ENCODE measurements at regions of chr1 and their contacts with region 1.

Region 1: DNA sequence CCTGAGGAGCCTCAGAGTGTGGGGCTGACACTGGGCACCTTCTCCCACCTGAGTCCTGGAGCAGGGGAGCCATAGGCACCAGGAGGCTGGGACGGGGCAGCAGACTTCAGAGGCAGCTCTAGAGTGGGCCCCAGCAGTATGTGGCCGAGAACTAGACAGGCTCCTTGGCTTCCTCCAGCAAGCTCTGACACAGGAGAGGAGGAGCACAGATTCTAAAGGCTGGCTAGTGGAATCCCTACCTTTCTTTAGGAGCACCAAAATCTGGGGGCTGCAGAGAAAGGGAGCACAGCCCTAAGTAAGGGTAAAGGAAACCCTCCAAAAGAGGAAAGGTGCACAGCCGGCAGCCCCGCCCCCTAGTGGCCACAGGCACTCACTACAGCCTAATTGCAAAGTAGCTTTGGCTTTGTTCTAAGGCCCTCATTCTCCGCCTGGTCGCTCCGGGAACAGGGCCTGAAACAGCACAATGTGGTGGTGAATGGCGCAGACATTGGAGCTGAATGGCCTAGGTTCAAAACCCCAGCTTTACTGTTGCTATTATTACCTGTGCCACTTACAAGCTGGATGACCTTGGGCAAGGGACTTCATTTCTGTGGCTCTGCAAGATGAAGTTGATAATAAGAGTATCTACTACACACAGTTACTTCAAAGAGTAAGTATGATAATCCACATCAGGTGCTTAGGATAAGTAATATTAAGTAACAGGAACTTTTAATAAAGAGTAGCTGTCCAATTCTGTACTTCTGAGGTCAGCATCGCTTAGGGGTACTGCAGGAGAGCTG is 8.8 kb upstream of the GUCA2A start:
- DNase-seq: peak; percentile 53 to 82 (median 66)
- H3K4me3 ChIP-seq: no peak overlapping the region
- H3K27ac ChIP-seq: peak overlapping the region; percentile 3 to 79 (median 67)
- H3K4me1 ChIP-seq: peaks cover 21 to 41% of the 10 kb centered on the region in 2 donors
- H3K27me3 ChIP-seq: no peaks in the 10 kb centered on the region
- CTCF ChIP-seq: peak; percentile 83 to 96 (median 92)
- POLR2A ChIP-seq: no peak

Region 2: DNA sequence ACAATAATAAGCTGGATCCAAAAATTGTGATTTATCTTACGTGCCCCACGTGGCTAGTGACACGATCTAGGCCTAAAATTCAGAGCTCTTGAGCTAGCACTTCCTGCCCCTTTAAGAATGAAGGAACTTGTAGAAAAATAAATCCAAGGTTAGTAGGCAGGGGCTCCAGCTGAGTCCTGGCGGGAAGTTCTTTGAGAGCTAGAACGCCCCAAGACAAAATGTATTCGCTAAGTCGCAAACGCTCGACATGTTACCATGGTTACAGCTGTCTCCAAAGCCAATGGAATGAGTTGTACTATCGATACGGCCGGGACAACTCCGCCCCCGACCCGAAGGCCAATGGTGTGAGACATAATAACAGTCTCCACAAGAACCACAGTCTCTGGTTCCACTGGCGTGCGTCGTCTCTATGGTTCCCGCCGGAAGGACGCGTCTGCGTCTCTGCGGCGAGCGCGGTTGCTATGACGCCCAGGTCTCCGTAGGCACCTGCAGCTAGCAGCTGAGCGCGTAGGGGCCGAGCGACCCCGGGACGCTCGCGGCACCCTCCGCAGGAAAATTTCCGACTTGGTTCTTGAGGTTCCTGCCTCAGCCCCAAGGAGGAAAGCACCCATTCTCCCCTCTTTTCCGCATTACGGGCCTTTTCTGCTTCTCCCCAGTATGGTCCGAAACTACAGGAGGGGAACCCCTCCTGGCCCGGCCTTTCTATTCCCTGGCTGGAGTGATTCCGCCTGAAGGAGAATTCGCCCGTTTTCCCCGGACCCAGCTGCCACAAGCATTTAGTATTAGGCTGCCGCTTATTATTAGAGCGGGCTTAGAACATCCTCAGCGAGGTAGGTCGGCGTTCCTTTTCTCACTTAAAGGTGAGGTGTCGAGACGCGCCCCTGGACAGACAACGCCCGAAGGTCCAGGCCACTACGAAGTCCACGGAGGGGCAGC is 289.8 kb after region 1 on chr1 and contains the start of gene CCDC30:
- intact Hi-C with region 1: loop called in 1 of 2 experiments (anchors 10 kb)
- DNase-seq: peak; percentile 96 to 100 (median 99)
- H3K4me3 ChIP-seq: peak within 1 kb of the TSS in 3 of 4 donors; percentile 26 to 56 (median 47)
- H3K27ac ChIP-seq: peak within 1 kb of the TSS; percentile 9 to 72 (median 29)
- H3K4me1 ChIP-seq: peaks cover 6 to 33% of the 10 kb centered on the region in 2 donors
- H3K27me3 ChIP-seq: no peaks in the 10 kb centered on the region
- CTCF ChIP-seq: no peak
- POLR2A ChIP-seq: no peak
- total RNA-seq, gene CCDC30: 1.8 to 8.3 (median 5.4) TPM

Measured in adrenal gland (tissue), 19 donors.